A549 (cell line): ENCODE measurements at regions of chr9 and their contacts with region 1.

Region 1: GRCh38 chr9:86222667-86223066 is 36.8 kb downstream of the C9orf153 start:
- DNase-seq: no peak
- ATAC-seq: no peak
- H3K4me3 ChIP-seq: no peak overlapping the region
- H3K27ac ChIP-seq: no peak overlapping the region
- H3K4me1 ChIP-seq: no peaks in the 10 kb centered on the region
- CTCF ChIP-seq: no peak
- EP300 ChIP-seq: no peak
- POLR2A ChIP-seq: no peak
- RAD21 ChIP-seq: no peak

Region 2: GRCh38 chr9:86238861-86239770 is 16.4 kb after region 1 on chr9:
- CTCF ChIA-PET with region 1: interaction called, 11 read pairs
- POLR2A ChIA-PET with region 1: no interaction called
- DNase-seq: peak in 1 of 2 experiments; percentile 14
- ATAC-seq: peak; percentile 54 to 79; a peak in 3 of 6 replicates
- H3K4me3 ChIP-seq: no peak overlapping the region
- H3K27ac ChIP-seq: no peak overlapping the region
- H3K4me1 ChIP-seq: no peaks in the 10 kb centered on the region
- CTCF ChIP-seq: peak; percentile 51
- EP300 ChIP-seq: no peak
- POLR2A ChIP-seq: no peak
- RAD21 ChIP-seq: peak; percentile 50 to 71

Region 3: GRCh38 chr9:86867804-86868313 is 645.2 kb after region 1 on chr9:
- CTCF ChIA-PET with region 1: no interaction called
- POLR2A ChIA-PET with region 1: no interaction called
- DNase-seq: no peak
- ATAC-seq: no peak
- H3K4me3 ChIP-seq: no peak overlapping the region
- H3K27ac ChIP-seq: no peak overlapping the region
- H3K4me1 ChIP-seq: no peaks in the 10 kb centered on the region
- CTCF ChIP-seq: no peak
- EP300 ChIP-seq: no peak
- POLR2A ChIP-seq: no peak
- RAD21 ChIP-seq: no peak